ENCODE measurements at regions of chr16 and their contacts with region 1.

Region 1: DNA sequence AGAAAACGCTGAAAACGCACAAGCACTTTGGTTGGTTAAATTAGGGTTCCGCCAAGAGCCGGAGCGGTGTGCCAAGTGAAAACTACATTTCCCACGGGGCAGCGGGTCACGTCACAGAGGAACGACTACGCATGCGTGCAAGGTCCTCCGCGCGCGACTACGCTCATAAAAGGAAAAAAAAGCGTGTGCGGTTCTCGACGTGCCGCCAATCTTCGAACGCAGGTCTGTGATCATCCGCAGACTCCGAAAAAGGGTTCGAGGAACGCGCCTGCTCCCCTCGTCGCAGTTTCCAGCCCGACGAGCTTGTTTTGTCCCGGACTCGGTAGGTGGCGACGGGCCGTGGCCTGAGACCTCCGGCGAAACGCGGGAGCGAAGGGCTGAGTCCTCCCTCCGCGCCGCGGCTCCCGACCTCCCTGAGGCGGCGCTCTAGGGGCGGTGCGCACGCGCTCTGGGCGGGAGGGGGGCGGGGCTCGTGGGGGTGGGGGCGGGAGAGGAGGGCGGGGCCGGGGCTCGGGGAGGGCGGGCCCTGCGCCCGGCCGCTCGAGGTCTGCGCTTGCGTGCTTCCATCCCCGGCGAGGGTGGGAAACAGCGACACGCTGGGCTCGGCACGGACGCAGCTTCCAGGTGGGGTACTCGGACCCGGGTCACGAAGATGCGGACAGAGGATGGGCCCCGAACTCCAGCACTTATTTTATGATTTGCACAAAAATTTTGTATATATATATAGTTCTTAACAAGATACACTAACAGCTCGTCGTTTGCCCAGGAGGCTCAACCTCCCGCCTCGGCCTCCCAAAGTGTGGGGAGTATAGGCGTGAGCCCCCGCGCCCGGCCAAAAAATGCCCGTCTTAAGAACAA is at the start of gene SGF29:
- DNase-seq: peak; percentile 90
- H3K4me3 Mint-ChIP-seq: peak within 1 kb of the TSS; percentile 92
- H3K27ac Mint-ChIP-seq: peak within 1 kb of the TSS; percentile 95
- H3K4me1 Mint-ChIP-seq: peaks cover 31% of the 10 kb centered on the region
- H3K27me3 Mint-ChIP-seq: peaks cover 2% of the 10 kb centered on the region
- total RNA-seq, gene SGF29: 38.6 and 39.0 TPM in 2 replicates

Region 2: DNA sequence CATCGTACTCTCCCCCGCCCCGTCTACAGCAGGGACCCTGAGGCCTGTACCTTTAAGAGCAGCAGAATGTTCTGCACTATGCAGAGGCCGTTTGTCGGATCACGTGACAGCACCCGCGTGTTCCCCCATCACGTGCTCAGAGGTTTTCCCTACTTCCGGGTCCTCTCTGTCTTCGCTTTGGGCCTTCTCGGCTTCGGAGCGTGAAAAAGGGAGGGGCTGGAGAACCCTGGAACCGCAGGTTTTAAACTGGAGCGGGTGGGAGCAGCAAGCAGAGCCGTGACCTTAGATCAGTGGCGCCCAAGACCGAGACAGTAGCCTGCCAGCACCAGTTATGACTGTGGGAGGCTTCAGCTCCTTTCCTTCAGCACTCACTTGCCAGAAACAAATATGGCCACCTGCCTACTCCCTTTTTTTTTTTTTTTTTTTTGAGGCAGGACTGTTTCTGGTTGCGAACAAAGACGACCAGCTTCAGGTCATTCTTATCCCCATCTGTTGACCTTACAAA is 62.0 kb before region 1 on chr16 and contains the start of gene CLN3:
- intact Hi-C with region 1: loop called (anchors 1 kb)
- DNase-seq: peak; percentile 84
- H3K4me3 Mint-ChIP-seq: peak within 1 kb of the TSS; percentile 89
- H3K27ac Mint-ChIP-seq: peak within 1 kb of the TSS; percentile 100
- H3K4me1 Mint-ChIP-seq: peaks cover 62% of the 10 kb centered on the region
- H3K27me3 Mint-ChIP-seq: no peaks in the 10 kb centered on the region
- total RNA-seq, gene CLN3: 27.1 and 28.5 TPM in 2 replicates

Region 3: GRCh38 chr16:28597692-28598261 is 43.8 kb after region 1 on chr16:
- intact Hi-C with region 1: no loop called
- DNase-seq: no peak
- H3K4me3 Mint-ChIP-seq: no peak overlapping the region
- H3K27ac Mint-ChIP-seq: no peak overlapping the region
- H3K4me1 Mint-ChIP-seq: no peaks in the 10 kb centered on the region
- H3K27me3 Mint-ChIP-seq: no peaks in the 10 kb centered on the region

Region 4: GRCh38 chr16:28623172-28623711 is 69.2 kb after region 1 on chr16:
- intact Hi-C with region 1: loop called (anchors 5 kb)
- DNase-seq: peak; percentile 42
- H3K4me3 Mint-ChIP-seq: peak overlapping the region; percentile 85
- H3K27ac Mint-ChIP-seq: peak overlapping the region; percentile 48
- H3K4me1 Mint-ChIP-seq: peaks cover 9% of the 10 kb centered on the region
- H3K27me3 Mint-ChIP-seq: peaks cover 9% of the 10 kb centered on the region

Region 5: GRCh38 chr16:28950648-28951409 is 396.8 kb after region 1 on chr16 and contains the start of gene NFATC2IP:
- intact Hi-C with region 1: loop called (anchors 5 kb)
- DNase-seq: peak; percentile 99
- H3K4me3 Mint-ChIP-seq: peak within 1 kb of the TSS; percentile 95
- H3K27ac Mint-ChIP-seq: peak within 1 kb of the TSS; percentile 95
- H3K4me1 Mint-ChIP-seq: peaks cover 33% of the 10 kb centered on the region
- H3K27me3 Mint-ChIP-seq: no peaks in the 10 kb centered on the region
- total RNA-seq, gene NFATC2IP: 110 and 111 TPM in 2 replicates